Activated naive CD8-positive, alpha-beta T cell treated with anti-CD3 and anti-CD28 coated beads, Interleukin-2, amount 10 ng/mL, durations not matched to agents 7 days and 5 days (primary cell): ENCODE measurements at regions of chr1 and their contacts with region 1.

Region 1: DNA sequence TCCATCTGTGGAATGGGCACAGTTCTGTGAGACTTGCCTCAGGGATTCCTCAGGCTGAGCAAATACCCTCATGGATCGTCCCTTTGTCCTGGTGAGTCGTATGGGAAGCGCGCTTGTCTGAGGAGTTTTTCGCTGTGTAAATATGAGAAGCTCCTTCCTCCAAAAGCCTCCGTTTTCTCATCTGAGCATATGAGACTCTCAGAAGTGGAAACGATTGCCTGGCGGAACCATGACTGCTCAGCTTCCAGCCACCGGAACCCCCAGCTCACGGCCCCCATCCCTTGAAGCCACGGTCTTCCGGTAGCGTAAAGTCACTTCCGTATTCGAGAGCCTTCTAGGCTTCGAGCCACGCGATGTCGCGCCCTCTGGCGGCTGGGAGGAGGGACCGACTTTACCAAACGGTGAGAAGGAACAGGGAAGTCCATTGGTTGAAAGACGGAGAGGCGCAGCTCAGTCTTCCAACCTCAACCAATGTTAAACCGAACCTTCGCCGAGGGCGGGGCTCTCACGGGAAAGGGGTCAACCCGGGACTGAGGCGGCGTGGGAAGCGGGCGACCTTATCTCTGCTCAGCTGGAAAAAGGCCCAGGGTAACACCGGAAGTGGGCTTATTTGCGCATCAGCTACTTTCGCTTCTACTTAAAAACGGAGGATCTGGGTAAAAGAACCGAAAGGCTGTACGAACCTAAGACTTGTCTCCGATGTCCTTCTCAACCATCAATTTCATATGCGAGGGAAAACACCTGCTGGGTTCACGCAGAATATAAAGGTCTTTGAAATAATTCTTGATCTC is 46.2 kb downstream of the AZIN2 start:
- DNase-seq: peak; percentile 98
- ATAC-seq: peak; percentile 98
- H3K4me3 Mint-ChIP-seq: peak overlapping the region; percentile 94
- H3K27ac Mint-ChIP-seq: peak overlapping the region; percentile 93
- H3K4me1 Mint-ChIP-seq: peaks cover 35% of the 10 kb centered on the region
- H3K27me3 Mint-ChIP-seq: no peaks in the 10 kb centered on the region

Region 2: GRCh38 chr1:32881291-32881690 is 245.9 kb before region 1 on chr1:
- POLR2A ChIA-PET with region 1: no interaction called
- DNase-seq: no peak
- ATAC-seq: no peak
- H3K4me3 Mint-ChIP-seq: no peak overlapping the region
- H3K27ac Mint-ChIP-seq: no peak overlapping the region
- H3K4me1 Mint-ChIP-seq: no peaks in the 10 kb centered on the region
- H3K27me3 Mint-ChIP-seq: peaks cover 47% of the 10 kb centered on the region

Region 3: DNA sequence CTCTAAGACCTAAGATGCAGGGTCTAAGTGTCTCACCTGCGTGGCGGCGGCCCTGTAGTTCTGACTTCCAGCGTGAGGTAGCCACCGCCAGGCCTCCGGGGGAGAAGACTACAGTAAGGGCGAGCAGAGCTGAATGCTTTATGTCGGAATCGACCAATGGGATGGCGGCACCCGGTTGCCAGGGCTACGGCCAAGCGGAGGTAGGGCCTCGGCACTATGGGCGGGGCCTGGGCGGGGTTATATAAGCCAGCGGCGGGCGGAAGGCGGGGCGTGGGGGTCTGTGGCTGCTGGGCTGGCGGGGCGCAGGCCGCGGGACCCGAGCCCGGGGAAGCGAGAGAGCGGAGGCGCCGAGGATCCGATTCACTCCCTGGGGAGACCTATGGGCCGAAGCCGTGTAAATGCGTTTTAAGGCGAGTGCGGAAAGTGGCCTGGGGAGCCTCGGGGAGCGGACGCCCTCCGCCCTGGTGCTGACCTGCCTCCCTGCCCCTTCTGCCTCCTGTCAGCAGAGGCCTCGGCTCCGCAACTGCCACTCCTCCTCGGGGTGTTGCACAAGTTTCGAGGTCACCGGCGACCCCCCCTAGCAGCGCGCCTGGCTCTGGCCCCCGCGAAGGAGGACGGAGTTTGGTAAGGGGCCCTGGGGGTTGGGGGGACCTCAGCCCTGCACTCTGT is 46.2 kb before region 1 on chr1 and contains the start of gene AZIN2:
- POLR2A ChIA-PET with region 1: interaction called, 12 read pairs
- DNase-seq: peak; percentile 98
- ATAC-seq: peak; percentile 98
- H3K4me3 Mint-ChIP-seq: peak within 1 kb of the TSS; percentile 88
- H3K27ac Mint-ChIP-seq: peak within 1 kb of the TSS; percentile 55
- H3K4me1 Mint-ChIP-seq: peaks cover 22% of the 10 kb centered on the region
- H3K27me3 Mint-ChIP-seq: peaks cover 6% of the 10 kb centered on the region
- total RNA-seq, gene AZIN2: 16.5 to 16.6 TPM

Region 4: GRCh38 chr1:33099290-33100118 is 27.7 kb before region 1 on chr1:
- POLR2A ChIA-PET with region 1: interaction called, 46 read pairs
- DNase-seq: peak; percentile 82
- ATAC-seq: peak; percentile 98
- H3K4me3 Mint-ChIP-seq: peak overlapping the region; percentile 84
- H3K27ac Mint-ChIP-seq: peak overlapping the region; percentile 97
- H3K4me1 Mint-ChIP-seq: peaks cover 58% of the 10 kb centered on the region
- H3K27me3 Mint-ChIP-seq: no peaks in the 10 kb centered on the region

Region 5: GRCh38 chr1:33161061-33161681 is 34.0 kb after region 1 on chr1:
- POLR2A ChIA-PET with region 1: no interaction called
- DNase-seq: no peak
- ATAC-seq: no peak
- H3K4me3 Mint-ChIP-seq: no peak overlapping the region
- H3K27ac Mint-ChIP-seq: no peak overlapping the region
- H3K4me1 Mint-ChIP-seq: peaks cover 1% of the 10 kb centered on the region
- H3K27me3 Mint-ChIP-seq: no peaks in the 10 kb centered on the region

Region 6: GRCh38 chr1:33181921-33182341 is 54.7 kb after region 1 on chr1 and contains the start of gene TRIM62:
- POLR2A ChIA-PET with region 1: interaction called, 20 read pairs
- DNase-seq: peak; percentile 89
- ATAC-seq: peak; percentile 50
- H3K4me3 Mint-ChIP-seq: peak within 1 kb of the TSS; percentile 93
- H3K27ac Mint-ChIP-seq: peak within 1 kb of the TSS; percentile 85
- H3K4me1 Mint-ChIP-seq: peaks cover 23% of the 10 kb centered on the region
- H3K27me3 Mint-ChIP-seq: peaks cover 33% of the 10 kb centered on the region
- total RNA-seq, gene TRIM62: 13.5 to 14.4 TPM

Region 7: GRCh38 chr1:33228935-33229487 is 101.8 kb after region 1 on chr1:
- POLR2A ChIA-PET with region 1: no interaction called
- DNase-seq: no peak
- ATAC-seq: no peak
- H3K4me3 Mint-ChIP-seq: no peak overlapping the region
- H3K27ac Mint-ChIP-seq: no peak overlapping the region
- H3K4me1 Mint-ChIP-seq: peaks cover 2% of the 10 kb centered on the region
- H3K27me3 Mint-ChIP-seq: peaks cover 21% of the 10 kb centered on the region